Endothelial cell of umbilical vein (primary cell): ENCODE measurements at regions of chr17 and their contacts with region 1.

Region 1: DNA sequence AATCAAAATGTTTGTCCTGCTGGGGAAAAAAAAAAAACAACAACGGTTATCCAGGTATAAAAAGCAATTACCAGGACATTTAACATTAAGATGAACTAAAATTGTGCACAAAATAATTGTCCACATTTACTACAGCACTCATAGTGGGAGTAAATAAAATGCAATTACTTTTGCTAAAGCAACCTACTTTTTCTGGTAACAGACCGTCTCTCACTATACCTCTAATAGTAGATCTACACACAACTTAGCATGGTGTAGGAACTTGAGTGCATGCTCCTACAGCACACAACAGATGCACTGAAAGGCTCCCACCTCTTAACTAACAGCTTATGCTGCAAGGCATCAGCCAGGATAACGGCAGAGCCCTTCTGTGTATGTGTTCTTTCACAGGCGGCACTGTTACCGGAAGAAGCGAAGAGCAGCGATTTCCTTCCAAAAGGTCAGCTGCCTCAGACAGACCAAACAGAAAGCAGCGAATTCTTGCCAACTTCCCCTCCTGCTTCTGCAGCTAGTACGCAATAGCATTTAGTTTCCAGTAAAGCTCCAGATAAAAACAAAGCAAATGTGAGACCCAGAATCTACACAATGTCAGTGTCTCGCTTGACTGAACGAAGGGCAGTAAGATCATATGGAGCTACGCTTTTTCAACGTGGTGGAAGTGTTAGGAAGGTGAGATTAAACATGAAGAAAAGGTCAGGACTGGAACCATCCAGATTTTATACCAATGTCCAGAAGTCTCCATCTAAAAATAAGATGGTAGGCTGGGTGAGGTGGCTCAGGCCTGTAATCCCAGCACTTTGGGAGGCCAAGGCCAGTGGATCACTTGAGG is 27.6 kb downstream of the STAT5B start:
- DNase-seq: peak; percentile 95
- H3K4me3 ChIP-seq: peak overlapping the region in 1 of 3 experiments; percentile 19
- H3K27ac ChIP-seq: peak overlapping the region; percentile 63
- H3K4me1 ChIP-seq: peaks cover 40% of the 10 kb centered on the region
- H3K27me3 ChIP-seq: no peaks in the 10 kb centered on the region
- CTCF ChIP-seq: no peak
- POLR2A ChIP-seq: peak; percentile 11

Region 2: DNA sequence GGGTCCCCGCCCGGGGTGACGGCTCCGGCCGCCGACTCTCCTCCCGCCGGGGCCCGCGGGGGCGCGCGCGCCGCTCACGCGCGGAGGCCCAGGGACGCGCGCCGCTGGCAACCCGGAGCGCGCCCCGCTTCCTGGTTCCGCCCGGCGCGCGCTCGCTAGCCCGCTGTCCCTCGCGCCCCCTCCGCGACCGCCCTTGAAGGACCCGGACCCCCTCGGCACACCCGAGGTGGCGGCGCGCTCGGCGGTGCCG is 27.7 kb after region 1 on chr17 and contains the start of gene STAT5B:
- CTCF ChIA-PET with region 1: interaction called, 7 read pairs
- POLR2A ChIA-PET with region 1: interaction called, 3 read pairs
- dilution Hi-C with region 1: no loop called
- intact Hi-C with region 1: loop called (anchors 2 kb)
- DNase-seq: peak; percentile 46
- H3K4me3 ChIP-seq: peak within 1 kb of the TSS; percentile 65 to 96 (median 79)
- H3K27ac ChIP-seq: peak within 1 kb of the TSS; percentile 59
- H3K4me1 ChIP-seq: peaks cover 16% of the 10 kb centered on the region
- H3K27me3 ChIP-seq: no peaks in the 10 kb centered on the region
- CTCF ChIP-seq: no peak
- POLR2A ChIP-seq: no peak
- total RNA-seq, gene STAT5B: 53.1 and 53.7 TPM in 2 replicates

Region 3: GRCh38 chr17:42438600-42439567 is 190.3 kb after region 1 on chr17:
- CTCF ChIA-PET with region 1: no interaction called
- POLR2A ChIA-PET with region 1: interaction called, 11 read pairs
- dilution Hi-C with region 1: no loop called
- intact Hi-C with region 1: no loop called
- DNase-seq: peak; percentile 40
- H3K4me3 ChIP-seq: no peak overlapping the region
- H3K27ac ChIP-seq: no peak overlapping the region
- H3K4me1 ChIP-seq: peaks cover 8% of the 10 kb centered on the region
- H3K27me3 ChIP-seq: no peaks in the 10 kb centered on the region
- CTCF ChIP-seq: peak; percentile 26 to 58
- POLR2A ChIP-seq: no peak